ENCODE measurements at regions of chr5 and their contacts with region 1.

Region 1: DNA sequence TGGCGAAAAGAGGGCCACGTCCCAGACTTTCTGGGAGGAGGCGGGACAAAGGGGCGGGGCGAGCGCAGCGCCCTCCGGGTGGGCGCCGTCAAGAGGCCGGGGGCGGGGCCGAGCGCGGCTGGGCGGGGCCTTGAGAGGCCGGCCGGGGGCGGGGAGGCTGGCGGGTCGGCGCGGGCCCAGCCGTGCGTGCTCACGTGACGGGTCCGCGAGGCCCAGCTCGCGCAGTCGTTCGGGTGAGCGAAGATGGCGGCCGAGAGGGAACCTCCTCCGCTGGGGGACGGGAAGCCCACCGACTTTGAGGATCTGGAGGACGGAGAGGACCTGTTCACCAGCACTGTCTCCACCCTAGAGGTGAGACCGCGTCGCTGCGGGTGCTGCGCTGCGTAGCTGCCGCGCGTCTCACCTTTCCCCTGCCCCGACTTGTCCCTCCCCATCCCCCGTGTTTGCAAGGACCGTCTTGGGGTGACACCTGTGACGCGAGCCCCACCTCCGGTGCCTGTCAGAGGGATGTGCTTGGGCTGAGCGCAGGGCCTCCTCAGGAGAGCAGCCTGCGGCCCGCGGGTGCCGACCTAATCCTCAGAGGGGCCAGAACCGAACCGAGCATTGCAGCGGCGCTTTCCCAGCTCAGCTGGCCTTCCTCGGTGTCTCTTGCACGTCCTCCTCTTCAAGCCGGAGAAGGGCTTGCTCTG is at the start of gene SNX2:
- DNase-seq: peak; percentile 93
- H3K4me3 Mint-ChIP-seq: peak within 1 kb of the TSS; percentile 92
- H3K27ac Mint-ChIP-seq: peak within 1 kb of the TSS; percentile 65
- H3K4me1 Mint-ChIP-seq: peaks cover 27% of the 10 kb centered on the region
- H3K27me3 Mint-ChIP-seq: no peaks in the 10 kb centered on the region
- total RNA-seq, gene SNX2: 44.5 to 44.6 TPM

Region 2: GRCh38 chr5:122704243-122705036 is 70.6 kb before region 1 on chr5:
- CTCF ChIA-PET with region 1: interaction called, 5 read pairs
- POLR2A ChIA-PET with region 1: no interaction called
- intact Hi-C with region 1: loop called (anchors 5 kb)
- DNase-seq: no peak
- H3K4me3 Mint-ChIP-seq: no peak overlapping the region
- H3K27ac Mint-ChIP-seq: no peak overlapping the region
- H3K4me1 Mint-ChIP-seq: no peaks in the 10 kb centered on the region
- H3K27me3 Mint-ChIP-seq: peaks cover 5% of the 10 kb centered on the region

Region 3: DNA sequence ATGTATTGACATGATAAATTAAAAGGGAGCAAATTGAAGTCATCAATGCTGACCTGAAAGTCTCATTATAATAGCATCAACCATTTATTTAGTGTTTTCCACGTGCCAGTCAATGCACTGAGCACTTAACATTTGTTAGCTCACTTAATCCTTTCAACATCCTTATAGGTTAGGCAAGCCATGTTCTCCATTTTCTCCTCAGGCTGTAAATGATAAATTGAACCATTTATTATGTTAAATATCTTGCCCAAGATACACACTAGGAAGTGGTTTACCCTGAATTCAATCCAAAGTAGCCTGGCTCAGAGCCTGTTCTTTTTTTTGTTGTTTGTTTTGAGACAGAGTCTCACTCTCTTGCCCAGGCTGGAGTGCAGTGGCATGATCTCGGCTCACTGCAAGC is 25.1 kb before region 1 on chr5:
- CTCF ChIA-PET with region 1: no interaction called
- POLR2A ChIA-PET with region 1: no interaction called
- intact Hi-C with region 1: no loop called
- DNase-seq: no peak
- H3K4me3 Mint-ChIP-seq: no peak overlapping the region
- H3K27ac Mint-ChIP-seq: no peak overlapping the region
- H3K4me1 Mint-ChIP-seq: no peaks in the 10 kb centered on the region
- H3K27me3 Mint-ChIP-seq: peaks cover 8% of the 10 kb centered on the region

Region 4: GRCh38 chr5:122845229-122846050 is 70.4 kb after region 1 on chr5 and contains the start of gene SNX24:
- CTCF ChIA-PET with region 1: interaction called, 3 read pairs
- POLR2A ChIA-PET with region 1: interaction called, 6 read pairs
- intact Hi-C with region 1: loop called (anchors 1 kb)
- DNase-seq: peak; percentile 83
- H3K4me3 Mint-ChIP-seq: peak within 1 kb of the TSS; percentile 81
- H3K27ac Mint-ChIP-seq: peak within 1 kb of the TSS; percentile 28
- H3K4me1 Mint-ChIP-seq: peaks cover 24% of the 10 kb centered on the region
- H3K27me3 Mint-ChIP-seq: no peaks in the 10 kb centered on the region
- total RNA-seq, gene SNX24: 6.4 to 7.5 TPM

Region 5: DNA sequence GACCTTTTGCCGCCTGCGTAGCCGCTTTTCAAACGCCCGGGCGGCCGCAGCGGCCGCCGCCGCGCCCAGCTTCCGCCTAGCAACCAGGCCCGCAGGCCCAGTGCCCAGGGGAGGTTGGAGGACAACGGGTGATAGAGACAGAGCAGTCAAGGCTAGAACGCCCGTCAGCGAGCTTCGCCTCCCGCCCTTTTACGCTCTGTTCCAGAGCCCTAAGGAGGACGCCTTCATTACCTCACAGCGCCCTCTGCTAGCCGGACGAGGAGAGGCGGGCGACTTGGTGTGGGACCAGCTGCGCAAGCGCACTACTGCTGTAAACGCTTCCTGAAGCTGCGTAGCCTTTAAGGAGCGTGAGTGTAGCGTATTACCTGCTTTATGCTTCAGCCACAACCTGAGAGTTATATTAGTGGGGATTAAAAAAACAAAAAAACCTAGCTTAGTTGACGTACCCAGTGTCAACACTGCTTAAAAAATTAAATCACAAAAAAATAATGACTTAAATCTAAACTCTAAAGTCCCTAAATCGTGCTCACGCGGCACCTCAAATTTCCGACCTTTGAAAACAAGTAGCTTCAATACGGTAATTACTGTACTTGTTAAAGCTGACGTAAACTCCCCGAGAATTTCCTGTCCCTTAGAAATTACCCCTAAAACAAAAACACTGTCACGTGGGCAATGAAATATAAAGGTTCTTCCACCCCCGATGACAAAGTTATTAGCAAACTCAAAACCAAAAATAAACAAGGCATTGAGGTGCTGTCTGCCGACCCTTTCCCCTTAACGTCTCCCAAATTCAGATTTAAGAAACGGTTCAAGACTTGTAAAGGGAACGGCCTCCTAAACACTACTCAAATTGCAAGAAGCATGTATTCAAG is 648.5 kb after region 1 on chr5 and contains the start of gene CEP120:
- CTCF ChIA-PET with region 1: no interaction called
- POLR2A ChIA-PET with region 1: no interaction called
- intact Hi-C with region 1: loop called (anchors 1 kb)
- DNase-seq: peak; percentile 98
- H3K4me3 Mint-ChIP-seq: no peak within 1 kb of the TSS
- H3K27ac Mint-ChIP-seq: no peak within 1 kb of the TSS
- H3K4me1 Mint-ChIP-seq: peaks cover 32% of the 10 kb centered on the region
- H3K27me3 Mint-ChIP-seq: no peaks in the 10 kb centered on the region
- total RNA-seq, gene CEP120: 31.7 to 33.2 TPM